ENCODE measurements at regions of chr3 and their contacts with region 1.

Region 1: GRCh38 chr3:128584412-128585020 is 66.1 kb downstream of the RPN1 start:
- DNase-seq: peak; percentile 82 to 85 (median 83)
- H3K4me3 ChIP-seq: peak overlapping the region in 1 of 7 experiments; percentile 28
- H3K27ac ChIP-seq: no peak overlapping the region
- H3K4me1 ChIP-seq: peaks cover 0 to 36% (median 17%) of the 10 kb centered on the region in 4 experiments
- H3K27me3 ChIP-seq: no peaks in the 10 kb centered on the region

Region 2: GRCh38 chr3:128432971-128433704 is 151.4 kb before region 1 on chr3:
- CTCF ChIA-PET with region 1: interaction called, 32 read pairs
- POLR2A ChIA-PET with region 1: no interaction called
- DNase-seq: peak in 2 of 3 donors; percentile 33 to 54
- H3K4me3 ChIP-seq: peak overlapping the region in 6 of 7 experiments; percentile 2 to 63 (median 43)
- H3K27ac ChIP-seq: no peak overlapping the region
- H3K4me1 ChIP-seq: peaks cover 0 to 13% (median 9%) of the 10 kb centered on the region in 4 experiments
- H3K27me3 ChIP-seq: peaks cover 0 to 32% (median 11%) of the 10 kb centered on the region in 5 experiments

Region 3: DNA sequence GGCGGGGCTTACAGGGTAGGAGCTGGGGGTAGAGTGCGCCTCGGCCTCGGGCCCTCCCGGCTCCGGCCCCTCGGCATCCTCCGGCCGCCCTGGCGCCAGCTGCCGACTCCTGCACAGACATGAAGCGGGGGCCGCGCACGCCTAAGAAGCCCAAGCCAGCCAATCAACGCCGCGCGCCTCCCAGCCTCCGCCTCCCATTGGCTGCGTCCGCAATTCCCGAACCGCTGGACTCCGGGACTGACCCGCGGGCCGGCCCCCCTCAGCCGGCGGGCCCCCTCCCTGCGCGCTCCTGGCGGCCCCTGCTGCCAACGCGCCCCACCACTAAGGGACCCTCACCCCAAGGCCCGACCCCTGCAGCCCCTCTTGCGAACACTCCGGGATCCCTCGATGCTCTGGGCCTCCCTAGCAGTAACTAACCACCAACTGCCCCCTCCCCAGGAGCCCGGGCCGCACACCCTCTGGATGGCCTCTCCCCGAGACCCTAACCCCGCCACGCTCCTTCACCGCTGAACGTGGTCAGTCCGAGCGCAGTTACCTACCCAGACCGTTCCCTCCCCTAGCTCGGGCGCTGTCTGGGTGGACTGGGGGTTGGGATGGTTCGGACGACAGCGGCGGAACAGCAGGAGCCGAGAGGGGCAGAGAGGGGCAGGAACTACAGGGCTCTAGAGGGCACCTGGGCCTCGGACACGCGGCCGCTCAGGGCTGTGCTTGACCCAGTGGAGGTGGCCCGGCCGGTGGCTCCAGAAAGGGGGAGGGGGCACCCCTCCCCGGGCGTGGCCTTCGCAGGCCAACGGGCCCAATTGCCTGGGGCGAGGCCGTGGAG is 96.5 kb before region 1 on chr3:
- CTCF ChIA-PET with region 1: interaction called, 24 read pairs
- POLR2A ChIA-PET with region 1: interaction called, 4 read pairs
- DNase-seq: peak; percentile 66 to 79 (median 70)
- H3K4me3 ChIP-seq: peak overlapping the region; percentile 70 to 98 (median 87)
- H3K27ac ChIP-seq: peak overlapping the region; percentile 81 to 93
- H3K4me1 ChIP-seq: peaks cover 3 to 95% (median 71%) of the 10 kb centered on the region in 4 experiments
- H3K27me3 ChIP-seq: peaks cover 0 to 11% (median 0%) of the 10 kb centered on the region in 5 experiments

Region 4: GRCh38 chr3:128505771-128506170 is 78.7 kb before region 1 on chr3:
- CTCF ChIA-PET with region 1: interaction called, 17 read pairs
- POLR2A ChIA-PET with region 1: no interaction called
- DNase-seq: peak in 2 of 3 donors; percentile 64 to 73
- H3K4me3 ChIP-seq: no peak overlapping the region
- H3K27ac ChIP-seq: no peak overlapping the region
- H3K4me1 ChIP-seq: no peaks in the 10 kb centered on the region
- H3K27me3 ChIP-seq: no peaks in the 10 kb centered on the region

Region 5: GRCh38 chr3:128607710-128608048 is 23.2 kb after region 1 on chr3:
- CTCF ChIA-PET with region 1: interaction called, 271 read pairs
- POLR2A ChIA-PET with region 1: interaction called, 4 read pairs
- DNase-seq: no peak
- H3K4me3 ChIP-seq: peak overlapping the region; percentile 23 to 76 (median 54)
- H3K27ac ChIP-seq: no peak overlapping the region
- H3K4me1 ChIP-seq: peaks cover 7 to 63% (median 29%) of the 10 kb centered on the region in 4 experiments
- H3K27me3 ChIP-seq: no peaks in the 10 kb centered on the region

Region 6: DNA sequence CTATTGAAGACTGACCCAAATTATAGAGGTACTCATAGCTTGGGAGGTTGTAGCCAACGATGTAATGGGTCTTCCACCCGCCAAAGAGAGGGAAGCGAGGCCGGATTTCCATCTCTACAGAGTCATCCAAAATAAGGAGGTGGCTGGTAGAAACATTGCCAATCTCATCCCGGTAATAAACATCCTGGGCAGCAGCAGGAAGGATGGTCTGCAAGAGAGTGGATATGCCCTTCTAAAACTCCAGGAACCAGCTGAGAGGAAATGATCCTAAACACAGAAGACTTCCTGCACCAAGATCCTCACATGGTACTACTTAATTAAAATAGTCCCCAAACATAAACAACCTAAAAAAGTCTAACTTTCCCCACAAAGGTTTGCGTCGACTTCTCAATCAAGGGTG is 45.4 kb after region 1 on chr3:
- CTCF ChIA-PET with region 1: no interaction called
- POLR2A ChIA-PET with region 1: no interaction called
- DNase-seq: no peak
- H3K4me3 ChIP-seq: no peak overlapping the region
- H3K27ac ChIP-seq: no peak overlapping the region
- H3K4me1 ChIP-seq: no peaks in the 10 kb centered on the region
- H3K27me3 ChIP-seq: no peaks in the 10 kb centered on the region

Measured in common myeloid progenitor, CD34-positive (primary cell).